H1 (cell line): ENCODE measurements at regions of chr22 and their contacts with region 1.

Region 1: GRCh38 chr22:38724926-38725571 is 19.3 kb downstream of the GTPBP1 start:
- DNase-seq: no peak
- H3K4me3 ChIP-seq: no peak overlapping the region
- H3K27ac ChIP-seq: no peak overlapping the region
- H3K4me1 ChIP-seq: no peaks in the 10 kb centered on the region
- H3K27me3 ChIP-seq: no peaks in the 10 kb centered on the region
- CTCF ChIP-seq: peak; percentile 45 to 72 (median 54)
- EP300 ChIP-seq: no peak
- POLR2A ChIP-seq: no peak
- RAD21 ChIP-seq: peak in 1 of 2 experiments; percentile 37; a peak in 2 of 4 replicates

Region 2: DNA sequence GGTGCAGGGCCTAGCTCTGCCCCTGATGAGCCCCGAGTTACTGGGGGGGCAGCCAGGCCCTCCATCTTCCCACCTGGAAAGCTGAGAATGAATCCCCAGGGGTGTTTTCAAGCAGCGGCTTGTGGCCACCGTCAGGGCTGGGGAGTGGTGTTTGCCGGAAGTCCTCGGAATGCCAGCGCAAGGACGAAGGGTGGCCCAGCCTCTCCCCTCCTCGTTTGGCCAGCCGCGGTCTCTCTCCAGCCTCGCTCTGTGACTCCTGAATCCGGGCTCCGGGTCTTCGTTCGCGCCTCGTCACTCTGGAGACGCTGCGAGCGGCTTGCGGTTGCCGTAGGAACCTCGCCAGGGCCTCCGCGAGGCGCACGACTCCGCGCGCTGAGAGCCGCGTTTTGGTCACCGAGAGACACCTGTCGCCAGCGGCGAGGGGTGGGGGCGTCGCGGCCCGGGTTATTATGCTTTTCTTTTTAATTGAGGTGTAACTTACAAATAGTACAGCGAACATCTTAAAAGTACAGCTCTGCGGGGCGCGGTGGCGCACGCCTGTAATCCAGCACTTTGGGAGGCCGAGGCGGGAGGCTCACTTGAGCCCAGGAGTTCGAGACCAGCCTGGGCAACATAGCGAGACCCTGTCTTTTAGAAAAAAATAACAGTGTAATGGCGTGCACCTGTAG is 263.5 kb before region 1 on chr22:
- CTCF ChIA-PET with region 1: no interaction called
- POLR2A ChIA-PET with region 1: no interaction called
- DNase-seq: peak; percentile 69 to 98
- H3K4me3 ChIP-seq: peak overlapping the region in 2 of 4 experiments; percentile 19 to 49; a peak in 3 of 8 replicates
- H3K27ac ChIP-seq: no peak overlapping the region
- H3K4me1 ChIP-seq: peaks cover 0 to 16% (median 8%) of the 10 kb centered on the region in 4 experiments; a peak in 6 of 7 replicates
- H3K27me3 ChIP-seq: peaks cover 0 to 38% (median 29%) of the 10 kb centered on the region in 4 experiments; a peak in 6 of 7 replicates
- CTCF ChIP-seq: no peak
- EP300 ChIP-seq: peak in 1 of 2 experiments; percentile 84; a peak in 1 of 3 replicates
- POLR2A ChIP-seq: no peak
- RAD21 ChIP-seq: no peak; a peak in 1 of 4 replicates

Region 3: GRCh38 chr22:38712486-38713207 is 12.4 kb before region 1 on chr22:
- CTCF ChIA-PET with region 1: interaction called, 26 read pairs
- POLR2A ChIA-PET with region 1: interaction called, 9 read pairs
- DNase-seq: no peak
- H3K4me3 ChIP-seq: no peak overlapping the region; a peak in 1 of 8 replicates
- H3K27ac ChIP-seq: no peak overlapping the region
- H3K4me1 ChIP-seq: peaks cover 4 to 11% (median 7%) of the 10 kb centered on the region in 4 experiments
- H3K27me3 ChIP-seq: no peaks in the 10 kb centered on the region
- CTCF ChIP-seq: no peak
- EP300 ChIP-seq: no peak
- POLR2A ChIP-seq: no peak
- RAD21 ChIP-seq: no peak

Region 4: DNA sequence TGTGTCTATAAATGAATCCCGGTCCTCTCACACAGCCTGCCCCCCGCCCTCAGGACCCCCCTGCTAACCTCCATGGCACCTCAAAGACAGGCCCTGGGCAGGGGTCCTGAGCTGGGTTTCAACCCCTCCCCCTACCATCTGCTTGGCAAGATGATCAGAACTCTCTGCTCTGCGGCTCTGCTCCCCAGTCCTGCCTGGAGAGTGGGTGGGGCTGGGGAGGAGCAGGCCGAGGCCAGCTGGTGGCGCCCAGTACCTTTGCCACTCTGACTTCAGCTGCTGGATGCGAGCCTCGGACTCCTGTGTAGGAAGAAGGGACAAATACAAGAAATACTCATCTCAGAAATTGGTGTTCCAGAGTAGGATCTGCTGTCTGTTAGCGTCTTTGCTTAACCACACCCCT is 15.7 kb after region 1 on chr22:
- CTCF ChIA-PET with region 1: interaction called, 116 read pairs
- POLR2A ChIA-PET with region 1: interaction called, 7 read pairs
- DNase-seq: no peak
- H3K4me3 ChIP-seq: no peak overlapping the region
- H3K27ac ChIP-seq: no peak overlapping the region
- H3K4me1 ChIP-seq: no peaks in the 10 kb centered on the region
- H3K27me3 ChIP-seq: no peaks in the 10 kb centered on the region
- CTCF ChIP-seq: peak; percentile 5 to 33 (median 21); a peak in 3 of 4 replicates
- EP300 ChIP-seq: no peak
- POLR2A ChIP-seq: no peak
- RAD21 ChIP-seq: peak; percentile 30 to 45

Region 5: GRCh38 chr22:38802671-38803121 is 77.6 kb after region 1 on chr22:
- CTCF ChIA-PET with region 1: no interaction called
- POLR2A ChIA-PET with region 1: no interaction called
- DNase-seq: peak in 1 of 2 experiments; percentile 52
- H3K4me3 ChIP-seq: peak overlapping the region; percentile 45 to 63 (median 54)
- H3K27ac ChIP-seq: no peak overlapping the region
- H3K4me1 ChIP-seq: peaks cover 0 to 3% (median 0%) of the 10 kb centered on the region in 4 experiments; a peak in 2 of 7 replicates
- H3K27me3 ChIP-seq: peaks cover 0 to 8% (median 4%) of the 10 kb centered on the region in 4 experiments; a peak in 3 of 7 replicates
- CTCF ChIP-seq: no peak
- EP300 ChIP-seq: no peak
- POLR2A ChIP-seq: no peak
- RAD21 ChIP-seq: no peak